ENCODE measurements at regions of chr19 and their contacts with region 1.

Region 1: DNA sequence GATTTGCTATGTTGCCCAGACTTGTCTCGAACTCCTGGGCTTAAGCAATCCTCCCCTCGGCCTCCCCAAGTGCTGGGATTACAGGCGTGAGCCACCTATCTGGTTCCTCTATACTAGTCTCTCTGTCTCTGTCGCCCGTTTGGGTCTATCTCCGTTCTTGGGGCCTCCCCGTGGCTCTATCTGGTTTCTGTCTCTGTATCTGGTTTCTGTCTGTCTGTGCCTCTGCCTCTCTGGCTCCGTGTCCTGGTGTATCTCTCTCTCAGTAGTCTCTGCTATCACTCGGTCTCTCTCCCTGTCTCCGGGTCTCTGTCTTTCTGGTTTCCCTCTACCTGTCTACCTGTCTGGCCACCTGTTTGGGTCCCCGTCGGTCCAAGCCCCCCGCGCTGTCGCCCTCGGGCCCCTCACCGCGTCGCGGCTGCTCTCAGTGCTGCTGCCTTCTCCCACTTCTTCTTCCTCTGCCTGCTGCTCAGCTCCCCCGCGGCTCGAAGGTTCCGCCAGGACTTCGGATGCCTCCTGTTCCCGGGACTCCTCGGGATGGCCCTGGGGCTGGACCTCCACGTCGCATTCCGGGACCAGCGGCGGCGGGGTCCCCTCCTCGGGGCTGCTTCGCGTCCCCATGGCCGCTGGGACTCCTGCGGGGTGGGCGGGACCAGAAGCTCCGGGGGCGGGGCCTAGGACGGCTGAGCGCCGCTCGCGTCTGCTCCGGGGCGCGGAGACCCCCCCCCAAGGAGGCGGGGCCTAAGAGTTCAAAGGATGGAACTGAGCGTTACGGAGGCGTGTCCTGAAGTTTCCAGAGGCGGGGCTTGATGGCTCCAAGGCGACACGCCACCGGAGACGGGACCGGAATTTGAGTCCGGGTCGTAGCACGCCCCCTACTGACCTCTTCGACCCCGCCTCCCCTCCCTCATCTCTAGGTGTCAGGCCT is 783 bp downstream of the PHLDB3 start:
- DNase-seq: peak; percentile 98 to 100 (median 99)
- ATAC-seq: peak; percentile 95
- H3K4me3 ChIP-seq: peak overlapping the region; percentile 97
- H3K4me3 Mint-ChIP-seq: peak overlapping the region; percentile 97
- H3K27ac ChIP-seq: peak overlapping the region; percentile 84 to 86
- H3K27ac Mint-ChIP-seq: peak overlapping the region; percentile 96
- H3K4me1 ChIP-seq: peaks cover 19% of the 10 kb centered on the region
- H3K4me1 Mint-ChIP-seq: peaks cover 34% of the 10 kb centered on the region
- H3K27me3 ChIP-seq: no peaks in the 10 kb centered on the region
- H3K27me3 Mint-ChIP-seq: no peaks in the 10 kb centered on the region
- CTCF ChIP-seq: no peak

Region 2: DNA sequence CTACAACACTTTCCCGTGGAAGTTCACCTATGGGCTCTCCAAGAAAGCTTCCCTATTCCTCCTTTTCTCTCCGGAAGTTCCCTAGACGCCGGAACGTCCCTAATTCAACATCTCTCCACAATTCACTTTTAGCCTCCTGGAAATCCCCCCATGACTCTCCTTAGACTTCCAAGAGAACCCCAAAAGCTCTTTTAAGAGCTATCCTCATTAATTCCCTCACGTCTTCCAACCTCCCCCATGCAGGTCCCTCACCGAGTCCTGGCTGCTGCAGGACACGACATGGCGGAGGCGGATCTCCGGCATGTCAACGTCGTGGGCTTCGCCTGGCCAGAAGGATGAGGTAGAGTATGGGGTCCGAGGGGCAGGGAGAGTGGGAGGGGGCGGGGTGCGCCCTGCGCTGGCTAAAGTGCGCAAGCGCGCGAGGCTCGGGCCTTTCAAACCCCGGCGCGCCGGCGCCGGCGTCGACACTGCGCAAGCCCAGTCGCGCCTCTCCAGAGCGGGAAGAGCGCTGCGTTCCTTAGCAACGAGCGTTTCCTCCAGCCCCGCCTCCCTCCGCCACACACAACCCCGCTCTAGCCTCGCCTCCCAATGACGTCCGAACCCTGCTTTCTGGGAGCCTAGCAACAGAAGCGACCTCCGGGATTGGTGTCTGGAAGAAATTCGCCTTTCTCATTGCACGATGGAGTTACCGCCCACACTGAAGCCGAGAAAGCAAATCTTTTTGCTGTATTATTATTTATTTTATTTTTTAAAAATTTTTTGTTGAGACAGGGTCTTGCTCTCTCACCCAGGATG is 71.6 kb after region 1 on chr19 and contains the starts of genes PINLYP and XRCC1:
- CTCF ChIA-PET with region 1: no interaction called
- POLR2A ChIA-PET with region 1: no interaction called
- intact Hi-C with region 1: no loop called
- DNase-seq: peak; percentile 93 to 100 (median 95)
- ATAC-seq: peak; percentile 96
- H3K4me3 ChIP-seq: peak within 1 kb of the TSS; percentile 87 to 98
- H3K4me3 Mint-ChIP-seq: peak within 1 kb of the TSS; percentile 95
- H3K27ac ChIP-seq: peak within 1 kb of the TSS; percentile 92 to 97
- H3K27ac Mint-ChIP-seq: peak within 1 kb of the TSS; percentile 96
- H3K4me1 ChIP-seq: peaks cover 29% of the 10 kb centered on the region
- H3K4me1 Mint-ChIP-seq: peaks cover 52% of the 10 kb centered on the region
- H3K27me3 ChIP-seq: no peaks in the 10 kb centered on the region
- H3K27me3 Mint-ChIP-seq: no peaks in the 10 kb centered on the region
- CTCF ChIP-seq: no peak
- total RNA-seq, gene PINLYP: 1.1 TPM
- total RNA-seq, gene XRCC1: 19.8 to 20.7 TPM

Region 3: DNA sequence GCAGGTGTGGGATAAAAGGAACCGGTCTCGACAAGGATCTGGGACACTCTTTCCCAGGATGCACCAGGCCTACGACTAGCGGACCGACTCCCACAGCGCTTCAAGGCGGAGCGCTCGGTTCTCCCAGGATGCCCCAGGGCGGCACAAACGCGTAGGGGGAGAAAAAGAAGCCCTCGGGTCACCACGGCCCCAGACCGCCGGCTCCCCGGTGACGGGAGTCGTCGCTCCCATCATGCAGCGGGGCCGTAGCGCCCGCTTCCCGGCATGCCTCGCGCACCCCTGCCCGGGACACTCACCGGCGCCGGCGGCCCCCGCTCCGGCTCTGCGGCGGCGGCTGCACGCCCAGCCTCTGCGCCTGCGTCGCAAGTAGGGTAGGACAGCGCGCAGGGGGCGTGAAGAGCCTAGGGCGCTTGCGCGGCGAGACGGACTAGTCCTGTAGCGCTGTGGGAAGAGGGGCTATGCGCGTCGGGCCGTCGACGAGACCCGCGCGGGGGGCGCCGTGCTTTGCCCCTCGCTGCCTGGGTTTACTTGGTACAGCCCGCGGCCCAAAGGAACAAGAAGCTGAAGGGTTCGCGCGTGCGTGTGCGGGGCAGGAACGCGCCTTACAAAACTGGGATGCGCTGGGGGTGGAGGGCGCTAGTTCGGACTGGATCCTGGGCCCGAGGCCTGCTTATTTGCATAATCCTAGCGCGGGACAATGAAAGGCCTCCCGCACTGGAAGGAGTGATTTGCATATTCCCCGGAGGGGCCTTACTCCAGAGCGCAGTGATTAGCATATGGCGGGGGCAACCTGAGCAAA is 115.7 kb after region 1 on chr19 and contains the start of gene ZNF428:
- CTCF ChIA-PET with region 1: no interaction called
- POLR2A ChIA-PET with region 1: no interaction called
- intact Hi-C with region 1: loop called in 1 of 2 experiments (anchors 1 kb)
- DNase-seq: peak; percentile 61 to 95 (median 86)
- ATAC-seq: peak; percentile 88
- H3K4me3 ChIP-seq: peak within 1 kb of the TSS; percentile 97 to 98
- H3K4me3 Mint-ChIP-seq: peak within 1 kb of the TSS; percentile 96
- H3K27ac ChIP-seq: peak within 1 kb of the TSS; percentile 78 to 90
- H3K27ac Mint-ChIP-seq: peak within 1 kb of the TSS; percentile 97
- H3K4me1 ChIP-seq: peaks cover 25% of the 10 kb centered on the region
- H3K4me1 Mint-ChIP-seq: peaks cover 32% of the 10 kb centered on the region
- H3K27me3 ChIP-seq: no peaks in the 10 kb centered on the region
- H3K27me3 Mint-ChIP-seq: no peaks in the 10 kb centered on the region
- CTCF ChIP-seq: no peak
- total RNA-seq, gene ZNF428: 31.8 to 33.3 TPM